Activated CD4-positive, alpha-beta memory T cell treated with anti-CD3 and anti-CD28 coated beads for 36 hours (primary cell): ENCODE measurements at regions of chr4 and their contacts with region 1.

Region 1: GRCh38 chr4:113684534-113685091 is 76.9 kb downstream of the CAMK2D start:
- DNase-seq: peak; percentile 72
- H3K4me3 Mint-ChIP-seq: peak overlapping the region; percentile 42
- H3K27ac Mint-ChIP-seq: peak overlapping the region; percentile 93
- H3K4me1 Mint-ChIP-seq: peaks cover 71% of the 10 kb centered on the region
- H3K27me3 Mint-ChIP-seq: no peaks in the 10 kb centered on the region

Region 2: GRCh38 chr4:113383111-113383785 is 301.4 kb before region 1 on chr4:
- CTCF ChIA-PET with region 1: no interaction called
- POLR2A ChIA-PET with region 1: no interaction called
- intact Hi-C with region 1: loop called (anchors 10 kb)
- DNase-seq: no peak
- H3K4me3 Mint-ChIP-seq: no peak overlapping the region
- H3K27ac Mint-ChIP-seq: no peak overlapping the region
- H3K4me1 Mint-ChIP-seq: peaks cover 15% of the 10 kb centered on the region
- H3K27me3 Mint-ChIP-seq: peaks cover 9% of the 10 kb centered on the region

Region 3: GRCh38 chr4:113474017-113474416 is 210.6 kb before region 1 on chr4:
- CTCF ChIA-PET with region 1: no interaction called
- POLR2A ChIA-PET with region 1: no interaction called
- intact Hi-C with region 1: loop called (anchors 1 kb)
- DNase-seq: peak; percentile 39
- H3K4me3 Mint-ChIP-seq: no peak overlapping the region
- H3K27ac Mint-ChIP-seq: peak overlapping the region; percentile 84
- H3K4me1 Mint-ChIP-seq: peaks cover 51% of the 10 kb centered on the region
- H3K27me3 Mint-ChIP-seq: no peaks in the 10 kb centered on the region

Region 4: DNA sequence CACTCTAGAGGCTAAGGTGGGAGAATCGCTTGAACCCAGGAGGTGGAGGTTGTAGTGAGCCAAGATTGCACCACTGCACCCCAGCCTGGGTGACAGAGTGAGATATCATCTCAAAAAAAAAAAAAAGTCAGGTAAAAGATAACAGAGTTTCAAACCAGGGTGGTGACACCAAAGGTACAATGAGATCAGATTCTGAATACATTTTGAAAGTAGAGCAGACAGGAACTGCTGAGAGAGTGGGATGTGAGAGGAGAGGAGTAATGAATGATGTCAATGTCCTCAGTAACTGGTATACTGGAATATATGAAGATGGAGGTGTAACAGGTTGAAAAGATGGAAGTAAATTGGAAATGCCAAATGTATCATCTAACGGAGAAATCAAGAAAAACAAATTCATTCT is 58.7 kb before region 1 on chr4:
- CTCF ChIA-PET with region 1: no interaction called
- POLR2A ChIA-PET with region 1: no interaction called
- intact Hi-C with region 1: loop called (anchors 1 kb)
- DNase-seq: peak; percentile 36
- H3K4me3 Mint-ChIP-seq: no peak overlapping the region
- H3K27ac Mint-ChIP-seq: peak overlapping the region; percentile 13
- H3K4me1 Mint-ChIP-seq: peaks cover 45% of the 10 kb centered on the region
- H3K27me3 Mint-ChIP-seq: no peaks in the 10 kb centered on the region

Region 5: DNA sequence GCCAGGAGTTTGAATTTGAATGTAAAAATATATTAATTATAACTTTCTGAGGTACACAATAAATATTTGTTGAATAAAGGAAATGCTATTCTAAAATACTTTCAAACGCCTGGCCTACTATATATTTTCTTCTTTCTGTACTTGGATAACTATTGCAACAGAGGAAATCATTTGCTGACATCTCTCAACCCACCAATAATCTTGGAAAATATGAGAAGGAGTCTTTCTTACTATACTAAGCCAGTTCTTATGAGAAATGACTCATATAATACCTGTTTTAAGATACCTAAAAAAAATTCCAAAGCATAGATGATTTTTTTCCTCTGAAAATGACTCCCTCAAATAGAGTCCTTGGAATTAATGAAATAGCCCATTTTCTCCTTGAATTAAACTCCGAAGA is 12.8 kb after region 1 on chr4:
- CTCF ChIA-PET with region 1: interaction called, 3 read pairs
- POLR2A ChIA-PET with region 1: interaction called, 8 read pairs
- intact Hi-C with region 1: loop called (anchors 1 kb)
- DNase-seq: no peak
- H3K4me3 Mint-ChIP-seq: no peak overlapping the region
- H3K27ac Mint-ChIP-seq: peak overlapping the region; percentile 67
- H3K4me1 Mint-ChIP-seq: peaks cover 36% of the 10 kb centered on the region
- H3K27me3 Mint-ChIP-seq: no peaks in the 10 kb centered on the region

Region 6: GRCh38 chr4:113756005-113756410 is 71.4 kb after region 1 on chr4:
- CTCF ChIA-PET with region 1: no interaction called
- POLR2A ChIA-PET with region 1: interaction called, 12 read pairs
- intact Hi-C with region 1: loop called (anchors 1 kb)
- DNase-seq: no peak
- H3K4me3 Mint-ChIP-seq: peak overlapping the region; percentile 28
- H3K27ac Mint-ChIP-seq: peak overlapping the region; percentile 66
- H3K4me1 Mint-ChIP-seq: peaks cover 44% of the 10 kb centered on the region
- H3K27me3 Mint-ChIP-seq: no peaks in the 10 kb centered on the region